Activated CD4-positive, alpha-beta T cell treated with anti-CD3 and anti-CD28 coated beads, Interleukin-2, amount 10 ng/mL, durations not matched to agents 24 days and 14 days (primary cell): ENCODE measurements at regions of chr4 and their contacts with region 1.

Region 1: DNA sequence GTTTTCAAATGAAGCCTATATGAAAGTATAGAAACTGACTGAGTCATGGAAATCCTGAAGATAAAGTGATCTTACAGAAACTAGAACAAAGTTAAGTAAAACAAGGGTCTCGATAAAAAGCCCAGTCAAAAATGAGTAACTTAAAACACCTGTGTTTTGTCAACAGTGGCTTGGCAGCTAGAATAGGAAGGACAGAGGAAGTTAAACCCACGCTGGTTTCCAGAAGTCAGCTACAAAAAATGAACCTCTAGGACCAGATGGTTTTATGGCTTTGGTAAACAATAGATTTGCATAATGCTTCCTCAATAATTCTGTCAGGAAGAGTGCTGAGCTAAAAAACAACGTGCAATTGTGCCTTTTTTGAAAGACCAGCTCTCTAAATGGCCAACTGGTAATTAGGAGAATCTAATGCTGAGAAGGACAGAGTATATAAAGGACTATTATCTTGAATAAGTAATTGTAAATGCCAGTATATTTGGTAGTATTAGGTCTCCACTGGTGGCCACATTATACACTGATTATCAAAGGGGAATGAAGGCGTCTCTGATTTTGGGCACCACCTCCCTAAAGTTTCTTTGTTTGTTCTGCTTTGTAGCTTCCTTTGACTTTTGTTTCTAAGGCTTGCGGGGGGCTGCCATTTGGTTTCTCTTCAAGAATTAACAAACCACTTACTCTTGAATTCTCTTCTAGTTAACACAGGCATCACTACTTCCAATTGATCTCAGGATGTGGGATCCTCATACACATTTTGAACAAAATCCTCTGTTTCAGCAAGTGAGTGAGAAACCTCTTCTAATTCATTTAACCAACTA is 72.2 kb upstream of the PPP3CA start:
- DNase-seq: peak; percentile 63
- H3K4me3 Mint-ChIP-seq: peak overlapping the region; percentile 71
- H3K27ac Mint-ChIP-seq: peak overlapping the region; percentile 55
- H3K4me1 Mint-ChIP-seq: peaks cover 44% of the 10 kb centered on the region
- H3K27me3 Mint-ChIP-seq: peaks cover 26% of the 10 kb centered on the region

Region 2: DNA sequence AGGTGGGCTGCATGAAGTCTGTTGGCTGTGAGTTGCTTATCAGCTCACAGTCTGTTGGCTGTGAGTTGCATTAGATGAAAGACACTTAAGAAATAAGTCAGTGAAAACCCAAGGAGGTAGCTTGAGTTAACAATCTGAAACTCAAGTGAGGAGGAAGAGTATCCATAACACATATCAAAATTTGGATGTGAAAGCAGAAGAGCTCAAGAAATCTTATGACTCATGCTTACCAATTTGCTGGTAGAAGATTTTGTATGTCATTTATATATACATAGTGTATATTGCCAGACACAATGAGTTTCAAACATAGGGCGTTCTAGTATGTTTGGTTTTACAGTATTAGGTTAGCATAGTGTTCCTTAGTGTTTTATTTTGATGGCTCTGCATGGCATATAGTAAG is 1336.7 kb before region 1 on chr4:
- intact Hi-C with region 1: loop called (anchors 5 kb)
- DNase-seq: no peak
- H3K4me3 Mint-ChIP-seq: no peak overlapping the region
- H3K27ac Mint-ChIP-seq: peak overlapping the region; percentile 30
- H3K4me1 Mint-ChIP-seq: peaks cover 28% of the 10 kb centered on the region
- H3K27me3 Mint-ChIP-seq: no peaks in the 10 kb centered on the region

Region 3: DNA sequence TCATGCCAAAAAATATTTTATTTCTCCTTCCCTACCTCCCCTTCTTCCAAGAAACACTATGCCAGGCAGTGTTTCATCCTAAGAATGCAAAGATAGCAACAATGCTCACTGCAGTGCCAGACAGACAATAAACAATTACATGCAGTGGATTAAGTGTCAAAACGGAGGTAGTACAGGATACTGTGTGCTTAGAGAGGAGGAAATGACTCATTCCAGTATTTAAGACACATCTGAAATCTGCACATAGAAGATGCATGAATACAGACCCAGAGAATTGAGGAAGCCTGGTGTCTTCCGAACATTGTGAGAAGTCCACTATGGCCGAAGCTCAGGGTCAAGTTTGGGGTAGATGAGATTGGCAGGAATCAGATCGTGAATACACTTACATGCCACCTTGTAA is 398.6 kb before region 1 on chr4:
- intact Hi-C with region 1: loop called (anchors 1 kb)
- DNase-seq: peak; percentile 77
- H3K4me3 Mint-ChIP-seq: peak overlapping the region; percentile 66
- H3K27ac Mint-ChIP-seq: peak overlapping the region; percentile 82
- H3K4me1 Mint-ChIP-seq: peaks cover 42% of the 10 kb centered on the region
- H3K27me3 Mint-ChIP-seq: no peaks in the 10 kb centered on the region

Region 4: GRCh38 chr4:101155368-101155767 is 264.2 kb before region 1 on chr4:
- intact Hi-C with region 1: loop called (anchors 5 kb)
- DNase-seq: no peak
- H3K4me3 Mint-ChIP-seq: no peak overlapping the region
- H3K27ac Mint-ChIP-seq: no peak overlapping the region
- H3K4me1 Mint-ChIP-seq: peaks cover 22% of the 10 kb centered on the region
- H3K27me3 Mint-ChIP-seq: no peaks in the 10 kb centered on the region

Region 5: DNA sequence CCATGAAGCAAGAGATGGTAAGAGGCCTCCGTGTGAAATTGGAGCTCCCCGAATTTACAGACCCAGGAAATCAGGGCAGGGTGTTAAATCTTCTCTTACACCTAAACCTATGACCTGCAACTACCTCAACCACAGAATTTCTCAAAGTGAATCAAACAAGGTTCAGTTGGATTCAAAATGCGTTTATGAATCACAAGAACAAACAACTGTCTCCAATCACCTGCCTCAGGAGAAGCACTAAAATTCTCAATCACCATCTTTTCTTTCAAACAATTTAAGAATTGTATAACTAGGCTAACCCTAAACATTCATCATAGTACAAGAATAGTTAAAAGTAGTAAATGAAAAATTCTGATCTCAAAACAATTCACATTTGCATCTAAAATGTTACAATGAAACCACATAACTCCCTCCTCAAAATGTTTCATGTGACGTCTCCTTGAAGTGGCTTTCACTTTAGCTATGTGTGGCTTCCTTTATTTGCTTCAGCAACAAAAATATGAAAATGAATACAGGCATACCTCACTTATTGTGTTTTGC is 91.4 kb before region 1 on chr4:
- intact Hi-C with region 1: loop called (anchors 1 kb)
- DNase-seq: peak; percentile 76
- H3K4me3 Mint-ChIP-seq: peak overlapping the region; percentile 68
- H3K27ac Mint-ChIP-seq: peak overlapping the region; percentile 54
- H3K4me1 Mint-ChIP-seq: peaks cover 18% of the 10 kb centered on the region
- H3K27me3 Mint-ChIP-seq: peaks cover 37% of the 10 kb centered on the region

Region 6: GRCh38 chr4:101527188-101527587 is 107.7 kb after region 1 on chr4:
- intact Hi-C with region 1: loop called (anchors 1 kb)
- DNase-seq: peak; percentile 87
- H3K4me3 Mint-ChIP-seq: peak overlapping the region; percentile 45
- H3K27ac Mint-ChIP-seq: peak overlapping the region; percentile 64
- H3K4me1 Mint-ChIP-seq: peaks cover 15% of the 10 kb centered on the region
- H3K27me3 Mint-ChIP-seq: peaks cover 46% of the 10 kb centered on the region

Region 7: DNA sequence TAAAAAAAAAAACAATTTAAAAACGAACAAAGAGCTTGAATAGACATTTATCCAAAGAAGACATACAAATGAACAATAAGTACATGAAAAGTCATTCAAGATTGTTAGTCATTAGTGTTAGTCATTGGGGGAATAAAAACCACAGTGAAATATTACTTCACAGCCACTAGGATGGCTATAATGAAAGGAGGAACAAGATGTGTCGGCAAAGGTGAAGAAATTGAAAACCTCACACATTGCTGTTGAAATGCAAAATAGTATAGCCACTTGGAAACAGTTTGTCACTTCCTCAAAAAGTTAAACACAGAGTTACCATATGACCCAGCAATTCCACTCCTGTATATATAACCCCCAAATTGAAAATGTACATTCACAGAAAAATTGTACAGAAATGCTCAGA is 970.9 kb after region 1 on chr4:
- intact Hi-C with region 1: loop called (anchors 5 kb)
- DNase-seq: no peak
- H3K4me3 Mint-ChIP-seq: no peak overlapping the region
- H3K27ac Mint-ChIP-seq: peak overlapping the region; percentile 69
- H3K4me1 Mint-ChIP-seq: peaks cover 10% of the 10 kb centered on the region
- H3K27me3 Mint-ChIP-seq: peaks cover 5% of the 10 kb centered on the region